WTC11 (cell line): ENCODE measurements at regions of chr11 and their contacts with region 1.

Region 1: DNA sequence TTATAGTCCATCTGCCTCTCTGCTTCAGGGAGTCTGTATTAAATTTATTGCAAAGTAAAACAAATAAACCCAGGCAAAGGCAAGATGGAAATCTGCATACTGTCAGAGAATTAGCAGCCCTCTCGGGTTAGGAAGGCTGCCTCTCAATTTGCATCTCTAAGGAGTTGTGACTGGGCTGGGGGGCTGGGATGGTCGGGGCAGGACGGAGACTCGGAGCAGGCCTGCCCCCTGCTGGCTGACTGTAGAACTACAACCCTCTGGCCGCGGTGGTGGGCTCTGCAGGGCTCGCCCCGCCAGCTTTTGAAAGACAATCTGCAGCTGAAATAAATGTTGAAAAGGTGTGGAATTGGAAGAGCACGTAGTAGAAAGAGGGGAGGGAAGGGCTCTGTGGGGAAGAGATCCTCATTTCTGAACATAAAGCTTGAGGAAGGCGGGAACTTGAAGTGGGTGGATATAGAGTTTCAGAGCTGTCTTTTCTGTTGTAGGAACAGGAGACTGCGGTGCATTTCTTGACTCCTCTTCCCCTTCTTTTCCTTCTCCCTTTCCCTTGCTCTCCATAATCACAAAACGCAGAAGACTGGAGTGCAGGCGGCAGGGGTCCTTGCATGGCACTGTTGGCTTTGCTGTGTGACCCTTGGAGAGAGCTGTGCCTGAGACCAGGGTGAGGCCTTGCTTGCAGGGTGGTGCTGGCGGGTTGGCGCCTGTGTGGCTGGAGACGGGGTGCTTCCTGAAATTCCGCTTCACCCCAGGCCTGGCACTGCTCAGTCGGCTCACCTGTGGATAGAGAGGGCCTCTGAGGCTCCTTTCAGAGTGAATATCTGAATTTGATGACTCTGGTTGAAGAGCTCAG is 22.6 kb upstream of the PKNOX2 start:
- DNase-seq: peak; percentile 90
- ATAC-seq: peak; percentile 88
- H3K4me3 Mint-ChIP-seq: peak overlapping the region; percentile 53
- H3K27ac Mint-ChIP-seq: no peak overlapping the region
- H3K4me1 Mint-ChIP-seq: peaks cover 62% of the 10 kb centered on the region
- H3K27me3 Mint-ChIP-seq: peaks cover 89% of the 10 kb centered on the region
- CTCF ChIP-seq: peak; percentile 99

Region 2: GRCh38 chr11:125001079-125001778 is 140.7 kb before region 1 on chr11:
- CTCF ChIA-PET with region 1: no interaction called
- POLR2A ChIA-PET with region 1: no interaction called
- DNase-seq: no peak
- ATAC-seq: no peak
- H3K4me3 Mint-ChIP-seq: no peak overlapping the region
- H3K27ac Mint-ChIP-seq: no peak overlapping the region
- H3K4me1 Mint-ChIP-seq: no peaks in the 10 kb centered on the region
- H3K27me3 Mint-ChIP-seq: no peaks in the 10 kb centered on the region
- CTCF ChIP-seq: no peak

Region 3: DNA sequence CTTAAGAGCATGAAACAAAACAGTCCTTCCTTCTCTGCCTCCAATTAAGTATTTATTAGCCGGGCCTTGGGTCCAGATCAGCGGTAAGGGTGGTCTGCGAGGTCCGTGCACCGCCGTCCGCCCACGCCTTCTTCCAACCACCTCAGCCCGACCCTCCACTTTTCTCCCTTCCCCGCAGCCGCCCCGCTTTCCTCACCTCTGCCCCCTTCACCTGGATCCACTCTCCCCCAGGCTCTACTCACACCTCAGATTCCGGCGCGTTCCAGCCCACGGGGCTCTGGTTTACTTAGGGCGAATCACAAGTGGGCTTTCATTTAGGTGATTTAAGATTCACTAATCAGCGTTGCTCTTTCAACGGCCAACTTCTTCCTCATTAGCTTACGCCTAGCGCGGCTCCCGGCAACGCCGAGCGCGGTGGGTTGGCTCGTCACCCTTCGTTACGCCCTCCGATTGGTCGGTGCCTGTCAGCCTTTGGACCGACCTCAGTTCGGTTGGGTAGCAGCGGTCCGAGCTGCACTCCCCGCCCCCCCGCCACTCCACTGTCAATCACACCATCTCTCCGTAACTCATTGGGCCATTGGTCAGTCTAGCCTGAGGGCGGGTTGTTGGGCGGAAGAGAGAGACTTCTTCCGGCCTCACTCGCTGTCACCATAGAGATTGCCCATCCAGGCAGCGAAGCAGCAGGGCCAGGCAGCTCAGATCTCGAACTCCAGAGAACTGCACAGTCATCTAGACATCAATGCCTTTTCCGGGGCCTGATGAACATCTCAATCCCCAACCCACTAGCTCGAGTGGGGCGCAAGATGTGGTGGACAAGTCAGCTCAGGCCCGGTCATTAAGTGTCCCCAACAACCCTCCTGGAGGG is 30.3 kb before region 1 on chr11 and contains the start of gene TMEM218:
- CTCF ChIA-PET with region 1: interaction called, 40 read pairs
- POLR2A ChIA-PET with region 1: interaction called, 3 read pairs
- DNase-seq: peak; percentile 98
- ATAC-seq: peak; percentile 99
- H3K4me3 Mint-ChIP-seq: peak within 1 kb of the TSS; percentile 98
- H3K27ac Mint-ChIP-seq: peak within 1 kb of the TSS; percentile 98
- H3K4me1 Mint-ChIP-seq: peaks cover 14% of the 10 kb centered on the region
- H3K27me3 Mint-ChIP-seq: no peaks in the 10 kb centered on the region; the same call in 1 of the 2 replicates
- CTCF ChIP-seq: no peak
- total RNA-seq, gene TMEM218: 10.3 to 12.4 TPM (median 11.0 TPM) in 3 replicates

Region 4: GRCh38 chr11:125123947-125124617 is 17.8 kb before region 1 on chr11:
- CTCF ChIA-PET with region 1: interaction called, 75 read pairs
- POLR2A ChIA-PET with region 1: no interaction called
- DNase-seq: peak; percentile 58
- ATAC-seq: peak; percentile 99
- H3K4me3 Mint-ChIP-seq: no peak overlapping the region
- H3K27ac Mint-ChIP-seq: no peak overlapping the region
- H3K4me1 Mint-ChIP-seq: no peaks in the 10 kb centered on the region
- H3K27me3 Mint-ChIP-seq: peaks cover 77% of the 10 kb centered on the region
- CTCF ChIP-seq: 0 out of 2 replicates have a peak, but pooled peaks have one; percentile 15

Region 5: DNA sequence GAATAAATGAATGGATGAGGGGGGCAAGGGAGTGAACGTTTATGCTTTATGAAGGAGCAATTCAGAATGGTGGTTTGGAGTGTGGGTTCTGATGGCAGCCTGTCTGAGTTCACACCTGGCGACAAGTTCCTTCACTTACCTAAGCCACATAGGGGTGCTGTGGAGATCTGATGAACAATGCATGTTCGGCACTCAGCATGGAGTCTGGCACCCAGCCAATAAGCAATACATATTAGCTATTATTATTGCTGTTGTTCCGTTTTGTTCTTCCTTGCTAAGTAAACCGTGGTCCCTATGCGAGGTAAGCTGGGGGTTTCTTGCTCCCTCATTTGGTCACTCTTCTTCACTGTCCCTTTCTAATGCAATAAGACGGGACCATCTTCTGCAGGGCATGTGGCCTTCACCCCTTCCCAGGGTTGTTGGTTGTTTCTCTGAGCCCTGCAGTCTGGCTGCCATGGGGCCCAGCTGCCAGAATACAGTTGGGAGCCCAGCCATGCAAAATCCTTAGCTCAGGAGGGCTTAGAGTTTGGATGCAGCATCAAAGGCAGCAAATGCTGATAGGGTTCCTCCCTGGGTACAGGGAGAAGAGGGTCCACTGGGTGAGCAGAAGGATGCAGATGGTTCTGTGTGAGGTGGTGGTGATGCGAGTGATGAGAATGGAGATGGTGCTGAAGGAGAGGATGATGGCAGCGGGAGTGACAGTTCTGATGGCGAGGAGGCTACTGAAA is 16.2 kb after region 1 on chr11:
- CTCF ChIA-PET with region 1: interaction called, 28 read pairs
- POLR2A ChIA-PET with region 1: no interaction called
- DNase-seq: no peak
- ATAC-seq: no peak
- H3K4me3 Mint-ChIP-seq: no peak overlapping the region
- H3K27ac Mint-ChIP-seq: no peak overlapping the region
- H3K4me1 Mint-ChIP-seq: peaks cover 29% of the 10 kb centered on the region
- H3K27me3 Mint-ChIP-seq: peaks cover 28% of the 10 kb centered on the region
- CTCF ChIP-seq: no peak

Region 6: GRCh38 chr11:125164422-125165110 is 22.7 kb after region 1 on chr11 and contains the start of gene PKNOX2:
- CTCF ChIA-PET with region 1: interaction called, 28 read pairs
- POLR2A ChIA-PET with region 1: no interaction called
- DNase-seq: peak; percentile 91
- ATAC-seq: peak; percentile 36
- H3K4me3 Mint-ChIP-seq: peak within 1 kb of the TSS; percentile 84
- H3K27ac Mint-ChIP-seq: peak within 1 kb of the TSS; percentile 95
- H3K4me1 Mint-ChIP-seq: peaks cover 69% of the 10 kb centered on the region
- H3K27me3 Mint-ChIP-seq: peaks cover 58% of the 10 kb centered on the region
- CTCF ChIP-seq: no peak
- total RNA-seq, gene PKNOX2: 1.9 to 3.7 TPM (median 2.3 TPM) in 3 replicates

Region 7: DNA sequence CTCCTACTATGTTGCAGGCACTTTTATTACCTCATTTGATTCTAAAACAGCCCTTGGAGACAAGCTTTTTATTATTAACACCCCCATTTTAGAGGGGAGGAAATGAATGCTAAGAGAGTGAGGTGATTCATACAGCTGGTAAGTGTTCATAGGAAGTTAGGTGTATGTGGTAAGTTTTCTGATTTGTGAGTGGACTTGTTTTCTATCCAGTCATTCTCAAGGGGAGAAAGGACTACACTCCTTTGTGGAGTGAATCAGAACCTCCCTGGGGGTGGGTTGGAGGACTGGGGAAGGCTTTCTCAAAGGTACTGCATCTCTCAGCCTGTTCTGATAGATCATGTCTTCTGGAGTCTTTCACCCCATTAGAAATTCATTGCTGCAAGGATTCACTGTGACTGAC is 46.1 kb after region 1 on chr11:
- CTCF ChIA-PET with region 1: no interaction called
- POLR2A ChIA-PET with region 1: no interaction called
- DNase-seq: no peak
- ATAC-seq: no peak
- H3K4me3 Mint-ChIP-seq: no peak overlapping the region
- H3K27ac Mint-ChIP-seq: no peak overlapping the region
- H3K4me1 Mint-ChIP-seq: peaks cover 24% of the 10 kb centered on the region
- H3K27me3 Mint-ChIP-seq: no peaks in the 10 kb centered on the region; the same call in 1 of the 2 replicates
- CTCF ChIP-seq: no peak

Region 8: DNA sequence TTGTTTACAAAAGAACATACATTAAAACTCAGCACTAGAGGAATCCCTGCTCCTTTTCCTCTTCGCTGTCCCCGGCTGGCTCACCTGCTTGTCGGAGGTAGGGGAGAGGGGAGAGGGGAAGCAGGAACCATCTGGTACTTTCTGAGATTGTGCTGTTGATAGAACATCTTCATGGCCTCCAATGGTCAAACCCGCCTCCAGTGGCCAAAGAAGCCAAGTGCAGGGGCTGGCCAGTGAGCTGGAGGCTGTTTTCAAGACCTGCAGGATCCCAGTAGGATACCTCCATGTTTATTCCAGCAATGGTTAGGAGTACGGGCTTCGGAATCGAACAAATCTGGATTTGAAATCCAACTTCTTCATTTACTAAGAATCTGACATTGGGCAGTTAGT is 115.3 kb after region 1 on chr11:
- CTCF ChIA-PET with region 1: interaction called, 16 read pairs
- POLR2A ChIA-PET with region 1: no interaction called
- DNase-seq: peak; percentile 69
- ATAC-seq: peak; percentile 76
- H3K4me3 Mint-ChIP-seq: no peak overlapping the region
- H3K27ac Mint-ChIP-seq: no peak overlapping the region
- H3K4me1 Mint-ChIP-seq: peaks cover 43% of the 10 kb centered on the region
- H3K27me3 Mint-ChIP-seq: peaks cover 12% of the 10 kb centered on the region
- CTCF ChIP-seq: peak; percentile 32; the same call in 1 of the 2 replicates

Region 9: DNA sequence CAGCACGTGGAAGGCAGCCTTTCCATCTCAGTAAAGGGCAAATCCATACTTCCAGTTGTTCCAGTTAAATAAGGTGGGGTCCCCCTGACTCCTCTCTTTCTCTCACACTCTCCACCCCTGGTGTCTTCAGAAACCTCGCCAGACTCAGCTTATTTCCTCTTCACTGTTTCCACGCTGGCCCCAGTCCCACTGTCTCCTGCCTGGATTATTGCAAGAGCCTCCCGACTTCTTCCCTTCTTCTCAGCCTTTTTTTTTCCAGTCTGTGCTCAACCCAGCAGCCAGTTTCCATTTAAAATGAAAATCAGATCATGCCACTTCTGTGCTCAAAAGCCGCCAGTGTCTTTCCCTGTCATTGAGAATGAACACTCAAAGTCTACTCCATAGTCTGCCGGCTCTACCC is 154.0 kb after region 1 on chr11:
- CTCF ChIA-PET with region 1: no interaction called
- POLR2A ChIA-PET with region 1: no interaction called
- DNase-seq: no peak
- ATAC-seq: no peak
- H3K4me3 Mint-ChIP-seq: no peak overlapping the region
- H3K27ac Mint-ChIP-seq: no peak overlapping the region
- H3K4me1 Mint-ChIP-seq: no peaks in the 10 kb centered on the region; the same call in 1 of the 2 replicates
- H3K27me3 Mint-ChIP-seq: no peaks in the 10 kb centered on the region
- CTCF ChIP-seq: no peak

Region 10: DNA sequence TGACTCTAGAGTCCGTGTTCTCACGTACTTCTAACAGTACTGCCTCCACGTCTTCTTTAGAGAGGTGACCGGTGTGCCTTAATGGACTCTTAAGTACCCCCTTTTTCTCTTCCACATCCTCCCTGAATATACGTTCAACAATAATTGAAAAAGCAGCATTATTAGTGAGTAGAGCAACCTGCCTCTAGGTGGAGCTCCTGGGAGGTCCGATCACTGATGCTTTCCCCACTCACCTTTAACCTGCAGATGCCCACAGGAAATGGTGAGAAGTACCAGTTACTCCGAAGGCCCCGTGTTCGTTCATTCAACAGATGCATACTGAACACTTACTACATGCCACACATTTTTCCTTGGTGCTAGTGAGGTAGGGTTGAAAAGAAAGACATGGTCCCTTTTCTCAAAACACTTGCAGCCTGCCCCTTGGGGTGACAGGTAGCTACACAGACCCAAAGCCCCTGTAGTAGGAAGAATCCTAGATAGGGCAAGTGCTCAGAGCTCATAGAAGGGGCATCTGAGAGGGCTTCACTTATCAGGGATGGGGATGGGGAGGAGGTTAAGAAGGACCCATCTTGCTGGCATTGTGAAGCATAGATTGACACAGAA is 281.4 kb after region 1 on chr11:
- CTCF ChIA-PET with region 1: interaction called, 27 read pairs
- POLR2A ChIA-PET with region 1: no interaction called
- DNase-seq: no peak
- ATAC-seq: peak; percentile 79
- H3K4me3 Mint-ChIP-seq: no peak overlapping the region
- H3K27ac Mint-ChIP-seq: no peak overlapping the region
- H3K4me1 Mint-ChIP-seq: peaks cover 21% of the 10 kb centered on the region
- H3K27me3 Mint-ChIP-seq: no peaks in the 10 kb centered on the region
- CTCF ChIP-seq: 0 out of 2 replicates have a peak, but pooled peaks have one; percentile 17